ENCODE measurements at regions of chr20 and their contacts with region 1.

Region 1: GRCh38 chr20:9407805-9408421 is 106.5 kb upstream of the LAMP5 start:
- DNase-seq: peak; percentile 58 to 78 (median 71)
- H3K4me3 ChIP-seq: no peak overlapping the region
- H3K27ac ChIP-seq: no peak overlapping the region
- H3K4me1 ChIP-seq: no peaks in the 10 kb centered on the region
- H3K27me3 ChIP-seq: no peaks in the 10 kb centered on the region

Region 2: DNA sequence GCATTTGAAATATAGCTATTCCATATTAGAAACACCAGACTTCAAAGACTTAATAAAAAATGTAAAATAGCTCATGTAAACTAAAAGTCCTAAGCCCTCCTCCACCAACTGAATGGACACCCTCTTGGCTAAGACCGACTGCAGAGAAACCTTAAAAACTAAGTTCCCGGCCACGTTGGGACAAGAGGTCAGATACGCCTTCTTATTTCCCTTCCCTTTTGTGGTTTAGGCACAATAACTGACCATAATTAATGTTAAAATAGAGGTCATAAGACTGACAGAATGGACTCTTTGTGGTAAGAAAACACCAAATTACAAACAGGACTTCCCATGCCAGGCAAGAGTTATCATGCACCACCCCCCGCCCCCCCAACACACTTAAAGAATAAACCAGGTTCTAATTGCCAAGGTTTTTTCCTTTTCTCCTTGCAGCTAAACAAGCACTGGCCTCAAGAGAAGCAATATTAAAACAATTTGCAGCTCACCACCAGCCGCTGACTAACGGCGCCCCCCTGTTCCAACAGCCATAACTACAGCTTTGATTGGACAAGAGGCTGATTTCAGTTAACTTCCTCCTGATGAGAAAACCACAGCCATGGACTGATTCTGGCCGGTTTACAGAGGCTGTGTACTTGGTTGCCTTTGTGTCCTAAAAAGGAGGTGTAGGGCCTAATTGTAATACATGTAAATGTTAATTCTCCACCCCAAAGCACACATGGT is 95.8 kb after region 1 on chr20:
- CTCF ChIA-PET with region 1: interaction called, 10 read pairs
- POLR2A ChIA-PET with region 1: no interaction called
- DNase-seq: peak; percentile 56 to 89 (median 85)
- H3K4me3 ChIP-seq: no peak overlapping the region
- H3K27ac ChIP-seq: no peak overlapping the region
- H3K4me1 ChIP-seq: peaks cover 4 to 32% (median 23%) of the 10 kb centered on the region in 4 experiments
- H3K27me3 ChIP-seq: peaks cover 2 to 62% (median 38%) of the 10 kb centered on the region in 5 experiments

Region 3: DNA sequence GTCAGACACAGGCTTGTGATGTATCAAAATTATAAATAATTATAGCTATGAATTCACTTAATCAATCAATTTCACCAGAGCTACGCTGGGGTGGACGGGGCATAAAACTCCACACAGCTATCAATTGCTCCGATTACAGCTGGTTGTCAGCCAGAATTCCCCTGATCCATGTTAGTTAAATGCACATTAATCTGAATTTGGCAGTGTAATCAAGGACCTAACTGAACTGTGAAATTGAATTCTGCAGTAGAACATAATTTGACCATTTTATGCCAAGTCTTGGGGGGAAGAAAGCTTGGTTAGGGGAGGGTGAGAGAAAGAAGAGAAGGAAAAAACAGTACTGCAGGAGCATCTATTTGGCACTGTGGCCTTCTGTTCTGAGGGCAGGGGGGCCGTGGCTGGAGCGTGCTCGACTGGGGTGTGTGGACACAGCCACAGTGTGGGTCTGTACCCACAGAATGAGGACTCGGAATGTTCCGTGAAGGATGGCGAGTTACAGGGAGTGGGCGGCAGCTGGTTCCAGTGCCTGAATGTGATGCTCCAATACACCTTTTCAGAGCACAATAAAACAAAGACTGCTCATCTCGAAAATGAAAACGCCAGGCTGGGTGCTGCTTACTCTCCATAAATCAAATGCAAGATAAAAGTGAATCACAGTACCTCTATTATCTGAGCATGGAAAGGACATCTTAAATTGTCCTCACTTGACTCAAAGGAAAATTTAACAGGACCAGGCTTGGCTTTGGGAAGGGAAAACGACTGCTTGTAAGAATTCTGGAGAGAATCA is 165.6 kb after region 1 on chr20:
- CTCF ChIA-PET with region 1: no interaction called
- POLR2A ChIA-PET with region 1: no interaction called
- DNase-seq: no peak
- H3K4me3 ChIP-seq: no peak overlapping the region
- H3K27ac ChIP-seq: no peak overlapping the region
- H3K4me1 ChIP-seq: peaks cover 0 to under 1% (median 0%) of the 10 kb centered on the region in 4 experiments
- H3K27me3 ChIP-seq: peaks cover 0 to 33% (median 16%) of the 10 kb centered on the region in 5 experiments

Region 4: GRCh38 chr20:9602847-9603183 is 194.9 kb after region 1 on chr20:
- CTCF ChIA-PET with region 1: interaction called, 99 read pairs
- POLR2A ChIA-PET with region 1: no interaction called
- DNase-seq: no peak
- H3K4me3 ChIP-seq: no peak overlapping the region
- H3K27ac ChIP-seq: no peak overlapping the region
- H3K4me1 ChIP-seq: no peaks in the 10 kb centered on the region
- H3K27me3 ChIP-seq: peaks cover 3 to 33% (median 10%) of the 10 kb centered on the region in 5 experiments

Region 5: DNA sequence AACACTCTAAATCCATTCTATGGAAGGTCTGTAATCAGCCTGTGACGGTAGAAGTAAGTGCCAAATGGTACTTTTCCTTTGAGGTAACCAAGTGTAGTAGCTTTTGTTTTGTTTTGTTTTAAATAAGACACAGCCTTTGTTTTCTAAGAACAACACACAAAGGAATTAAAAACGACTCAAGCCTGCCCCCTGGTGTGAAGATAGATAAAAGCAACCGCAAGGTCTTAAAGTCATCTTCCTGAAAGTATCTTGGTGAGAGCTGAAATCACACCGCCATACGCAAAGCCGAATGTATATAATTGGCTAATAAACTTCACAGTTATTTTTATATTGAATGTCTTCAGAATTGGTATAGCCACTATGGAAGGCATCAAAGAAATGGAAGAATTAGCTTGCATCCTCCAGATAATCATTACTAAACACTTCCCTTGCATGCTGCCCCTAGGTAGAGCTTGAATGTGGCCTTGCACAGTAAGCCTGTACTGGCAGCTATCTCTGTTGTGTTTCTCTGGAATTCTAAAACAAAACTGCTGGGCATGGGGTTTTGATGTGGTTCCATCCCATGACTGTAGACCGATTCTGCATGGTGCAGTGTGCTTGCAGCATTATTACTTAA is 202.1 kb after region 1 on chr20:
- CTCF ChIA-PET with region 1: interaction called, 99 read pairs
- POLR2A ChIA-PET with region 1: no interaction called
- DNase-seq: peak; percentile 74 to 90 (median 82)
- H3K4me3 ChIP-seq: no peak overlapping the region
- H3K27ac ChIP-seq: no peak overlapping the region
- H3K4me1 ChIP-seq: no peaks in the 10 kb centered on the region
- H3K27me3 ChIP-seq: peaks cover 0 to 48% (median 22%) of the 10 kb centered on the region in 5 experiments